Activated CD4-positive, alpha-beta T cell treated with anti-CD3 and anti-CD28 coated beads, Interleukin-2, amount 10 ng/mL, durations not matched to agents 7 days and 5 days (primary cell): ENCODE measurements at regions of chr16 and their contacts with region 1.

Region 1: DNA sequence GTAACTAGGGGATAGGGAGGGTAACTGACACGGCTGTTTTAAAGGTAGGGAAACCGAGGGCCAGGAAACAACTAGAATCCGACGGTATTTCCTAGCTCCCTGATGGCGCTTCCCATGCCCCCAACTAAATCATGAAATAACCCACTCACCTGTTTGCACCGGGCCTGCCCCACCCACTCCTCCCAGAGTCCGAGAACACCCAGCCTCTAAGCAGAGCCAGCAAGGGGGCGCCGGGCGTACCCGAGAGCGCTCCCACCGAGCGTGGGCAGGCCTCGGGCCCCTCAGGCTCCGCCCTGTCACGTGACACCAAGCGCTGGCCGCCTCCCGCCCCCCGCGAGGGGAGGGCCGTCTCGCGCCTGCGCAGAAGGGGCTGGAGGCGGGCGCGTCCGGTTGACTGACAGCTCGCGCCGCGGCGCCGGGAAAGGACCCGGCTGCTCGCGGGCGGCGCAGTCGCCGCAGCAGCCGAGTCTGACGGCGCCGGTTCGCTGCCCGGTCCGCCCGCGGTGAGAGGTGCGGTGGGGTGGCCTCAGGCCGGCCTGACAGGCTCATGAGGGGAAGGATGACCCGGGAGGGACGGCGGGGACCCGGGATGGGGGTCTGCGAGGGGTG is at the start of gene KIAA0513:
- DNase-seq: peak; percentile 95
- H3K4me3 Mint-ChIP-seq: peak within 1 kb of the TSS; percentile 90
- H3K27ac Mint-ChIP-seq: peak within 1 kb of the TSS; percentile 96
- H3K4me1 Mint-ChIP-seq: peaks cover 44% of the 10 kb centered on the region
- H3K27me3 Mint-ChIP-seq: no peaks in the 10 kb centered on the region
- total RNA-seq, gene KIAA0513: 13.6 to 14.8 TPM

Region 2: DNA sequence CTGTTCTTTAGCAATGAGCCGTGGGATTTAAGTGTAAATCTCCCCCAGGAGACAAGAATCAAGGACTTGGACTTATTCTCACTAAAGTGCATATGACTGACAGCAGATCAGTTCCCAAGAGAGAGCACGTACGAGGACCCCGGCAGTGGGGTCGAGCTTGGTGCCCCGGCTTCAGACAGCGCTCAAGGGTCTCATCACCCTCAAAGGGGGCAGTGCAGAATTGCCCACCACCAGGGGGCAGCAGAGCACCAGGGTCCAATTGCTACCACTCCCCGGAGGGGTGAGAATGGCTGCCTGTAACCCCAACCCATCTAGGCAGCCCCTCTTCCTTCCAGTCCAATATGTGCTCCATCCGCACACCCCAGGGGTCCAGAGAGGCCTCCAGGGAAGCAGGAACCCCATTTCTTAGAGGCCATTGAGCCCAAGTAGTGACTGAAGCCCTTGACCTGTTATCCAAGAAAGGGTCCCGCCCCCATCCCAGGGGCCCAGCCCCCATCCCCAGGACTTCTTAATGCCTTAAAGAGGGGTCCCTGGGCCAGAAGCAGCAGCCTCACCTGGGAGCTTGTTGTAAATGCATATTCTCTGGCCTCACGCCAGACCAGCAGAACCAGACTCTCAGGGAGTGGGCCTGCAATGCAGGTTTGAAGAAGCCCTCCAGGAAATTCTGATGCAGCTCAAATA is 102.2 kb before region 1 on chr16:
- CTCF ChIA-PET with region 1: no interaction called
- POLR2A ChIA-PET with region 1: no interaction called
- DNase-seq: peak; percentile 77
- H3K4me3 Mint-ChIP-seq: no peak overlapping the region
- H3K27ac Mint-ChIP-seq: no peak overlapping the region
- H3K4me1 Mint-ChIP-seq: no peaks in the 10 kb centered on the region
- H3K27me3 Mint-ChIP-seq: no peaks in the 10 kb centered on the region

Region 3: DNA sequence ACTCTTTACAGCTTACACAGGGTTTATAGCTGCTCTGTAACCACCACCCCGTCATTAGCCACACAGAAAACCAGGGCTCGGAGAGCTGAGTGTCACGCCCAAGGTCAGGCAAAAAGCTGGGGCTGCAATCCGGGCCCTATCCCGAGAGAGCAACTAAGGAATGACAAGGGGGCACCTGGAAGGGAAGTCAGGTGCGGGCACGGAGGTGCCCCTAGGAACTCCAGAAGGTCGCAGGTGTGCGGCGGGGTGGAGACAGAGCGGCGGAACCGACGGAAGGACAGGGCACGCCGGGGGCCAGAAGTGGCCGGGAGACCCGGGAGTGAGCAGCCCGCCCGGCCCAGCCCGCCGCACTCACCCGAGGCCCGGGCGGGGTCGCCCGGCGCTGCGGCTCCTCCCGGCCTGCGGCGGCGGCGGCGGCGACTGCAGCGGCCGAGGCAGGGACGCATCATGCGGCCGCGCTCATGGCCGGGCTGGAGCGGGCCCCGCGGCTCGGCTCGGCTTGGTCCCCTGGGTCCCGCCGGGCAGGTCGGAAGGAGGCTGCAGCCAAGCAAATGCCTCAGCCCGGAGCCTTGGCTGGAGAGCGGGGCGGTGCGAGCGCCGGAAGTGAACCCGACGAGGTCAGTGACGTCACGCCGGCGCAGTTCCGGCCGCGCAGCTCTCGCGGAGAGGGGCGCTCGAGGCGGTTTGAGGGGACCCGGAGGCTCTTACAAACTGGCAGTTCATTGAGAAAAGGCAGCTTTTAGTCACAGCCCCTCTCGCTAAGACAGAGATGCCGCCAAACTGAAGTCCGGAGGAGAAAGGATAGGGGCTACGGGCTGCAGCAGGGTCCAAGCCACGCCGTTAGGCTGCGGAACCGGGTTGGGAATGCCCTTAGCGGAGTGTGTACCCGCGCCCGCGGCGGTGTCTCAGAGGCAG is 16.3 kb before region 1 on chr16 and contains the start of gene ZDHHC7:
- CTCF ChIA-PET with region 1: interaction called, 12 read pairs
- POLR2A ChIA-PET with region 1: interaction called, 3 read pairs
- DNase-seq: peak; percentile 85
- H3K4me3 Mint-ChIP-seq: peak within 1 kb of the TSS; percentile 96
- H3K27ac Mint-ChIP-seq: peak within 1 kb of the TSS; percentile 99
- H3K4me1 Mint-ChIP-seq: peaks cover 39% of the 10 kb centered on the region
- H3K27me3 Mint-ChIP-seq: no peaks in the 10 kb centered on the region
- total RNA-seq, gene ZDHHC7: 30.7 to 33.9 TPM

Region 4: GRCh38 chr16:85086347-85087291 is 59.2 kb after region 1 on chr16:
- CTCF ChIA-PET with region 1: interaction called, 14 read pairs
- POLR2A ChIA-PET with region 1: no interaction called
- DNase-seq: peak; percentile 82
- H3K4me3 Mint-ChIP-seq: no peak overlapping the region
- H3K27ac Mint-ChIP-seq: peak overlapping the region; percentile 62
- H3K4me1 Mint-ChIP-seq: peaks cover 30% of the 10 kb centered on the region
- H3K27me3 Mint-ChIP-seq: no peaks in the 10 kb centered on the region